AG04450 (cell line): ENCODE measurements at regions of chr16 and their contacts with region 1.

Region 1: DNA sequence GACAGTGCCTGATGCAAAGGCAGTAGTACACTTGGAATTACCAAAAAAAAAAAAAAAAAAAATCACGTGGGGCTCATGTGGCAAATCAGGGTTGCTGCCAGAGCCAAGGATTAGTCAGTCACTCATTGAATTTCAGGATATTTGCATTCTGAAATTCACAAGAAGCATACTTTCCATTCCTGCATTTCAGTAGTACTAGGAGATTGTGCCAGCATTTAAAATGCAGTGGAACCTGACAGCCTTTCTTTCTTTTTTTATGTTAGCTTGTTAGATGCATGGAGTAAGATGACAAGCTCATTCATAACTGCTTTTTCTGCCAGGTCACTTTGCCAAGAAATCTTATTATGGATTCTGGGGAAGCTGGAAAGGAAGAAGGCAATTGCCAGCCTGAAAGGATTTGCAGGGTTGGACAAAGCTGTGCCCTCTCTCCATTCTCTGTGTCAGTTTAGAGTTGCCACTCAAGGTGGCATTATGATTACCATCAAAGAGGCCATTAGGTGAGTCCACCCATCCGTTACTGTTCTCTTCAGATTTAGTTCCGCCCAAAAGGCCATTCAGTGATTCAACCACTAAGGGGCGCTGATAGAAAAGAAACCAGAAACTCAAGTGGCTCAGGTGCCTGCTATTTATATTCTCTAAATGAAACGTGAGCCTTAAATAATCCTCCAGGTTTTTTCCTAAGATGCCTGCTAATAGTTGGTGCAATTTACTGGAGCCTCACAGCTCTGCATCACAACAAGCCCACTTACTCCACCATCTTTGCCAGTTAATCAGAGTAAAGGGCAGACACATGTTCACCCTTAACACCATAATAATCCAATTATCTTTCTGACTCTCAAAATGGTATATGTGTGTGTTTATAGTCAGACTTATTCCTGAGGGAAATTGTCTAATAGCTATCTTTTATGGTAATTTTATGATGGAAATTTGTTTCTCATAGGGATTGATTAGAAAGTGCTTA is 59.0 kb downstream of the TANGO6 start:
- DNase-seq: peak; percentile 37
- H3K4me3 ChIP-seq: no peak overlapping the region
- H3K27ac ChIP-seq: no peak overlapping the region
- H3K27me3 ChIP-seq: no peaks in the 10 kb centered on the region
- CTCF ChIP-seq: peak; percentile 81

Region 2: GRCh38 chr16:68144008-68144407 is 758.3 kb before region 1 on chr16:
- CTCF ChIA-PET with region 1: interaction called, 10 read pairs
- POLR2A ChIA-PET with region 1: no interaction called
- DNase-seq: no peak
- H3K4me3 ChIP-seq: no peak overlapping the region
- H3K27ac ChIP-seq: no peak overlapping the region
- H3K27me3 ChIP-seq: no peaks in the 10 kb centered on the region
- CTCF ChIP-seq: no peak

Region 3: DNA sequence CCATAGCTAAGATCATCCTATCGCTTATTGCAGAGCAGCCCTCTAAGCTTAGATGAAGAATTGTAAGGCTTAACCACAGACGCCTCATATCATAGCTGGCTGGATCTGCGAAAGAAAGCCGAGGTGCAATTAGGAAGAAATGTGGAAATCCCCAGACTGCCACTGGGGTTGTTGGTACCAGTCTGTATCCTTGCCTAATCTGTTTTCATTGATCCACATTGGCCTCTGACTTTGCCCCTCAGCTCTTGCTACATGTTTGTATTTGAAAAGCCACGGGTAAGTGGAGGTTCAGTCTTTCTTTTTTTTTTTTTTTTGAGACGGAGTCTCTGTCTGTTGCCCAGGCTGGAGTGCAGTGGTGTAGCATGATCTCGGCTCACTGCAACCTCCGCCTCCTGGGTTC is 10.1 kb before region 1 on chr16:
- CTCF ChIA-PET with region 1: no interaction called
- POLR2A ChIA-PET with region 1: no interaction called
- DNase-seq: no peak
- H3K4me3 ChIP-seq: no peak overlapping the region
- H3K27ac ChIP-seq: no peak overlapping the region
- H3K27me3 ChIP-seq: no peaks in the 10 kb centered on the region
- CTCF ChIP-seq: no peak

Region 4: GRCh38 chr16:69083329-69083941 is 181.1 kb after region 1 on chr16:
- CTCF ChIA-PET with region 1: no interaction called
- POLR2A ChIA-PET with region 1: no interaction called
- DNase-seq: no peak
- H3K4me3 ChIP-seq: no peak overlapping the region
- H3K27ac ChIP-seq: no peak overlapping the region
- H3K27me3 ChIP-seq: no peaks in the 10 kb centered on the region
- CTCF ChIP-seq: 0 out of 2 replicates have a peak, but pooled peaks have one; percentile 5

Region 5: GRCh38 chr16:69112285-69113129 is 210.2 kb after region 1 on chr16:
- CTCF ChIA-PET with region 1: interaction called, 11 read pairs
- POLR2A ChIA-PET with region 1: no interaction called
- DNase-seq: no peak
- H3K4me3 ChIP-seq: no peak overlapping the region
- H3K27ac ChIP-seq: no peak overlapping the region
- H3K27me3 ChIP-seq: peaks cover 2% of the 10 kb centered on the region
- CTCF ChIP-seq: peak; percentile 81